ENCODE measurements at regions of chr16 and their contacts with region 1.

Region 1: GRCh38 chr16:67521095-67521804 is 7.4 kb upstream of the RIPOR1 start:
- DNase-seq: peak; percentile 59
- H3K4me3 ChIP-seq: peak overlapping the region; percentile 45
- H3K27me3 ChIP-seq: no peaks in the 10 kb centered on the region
- CTCF ChIP-seq: peak; percentile 98

Region 2: DNA sequence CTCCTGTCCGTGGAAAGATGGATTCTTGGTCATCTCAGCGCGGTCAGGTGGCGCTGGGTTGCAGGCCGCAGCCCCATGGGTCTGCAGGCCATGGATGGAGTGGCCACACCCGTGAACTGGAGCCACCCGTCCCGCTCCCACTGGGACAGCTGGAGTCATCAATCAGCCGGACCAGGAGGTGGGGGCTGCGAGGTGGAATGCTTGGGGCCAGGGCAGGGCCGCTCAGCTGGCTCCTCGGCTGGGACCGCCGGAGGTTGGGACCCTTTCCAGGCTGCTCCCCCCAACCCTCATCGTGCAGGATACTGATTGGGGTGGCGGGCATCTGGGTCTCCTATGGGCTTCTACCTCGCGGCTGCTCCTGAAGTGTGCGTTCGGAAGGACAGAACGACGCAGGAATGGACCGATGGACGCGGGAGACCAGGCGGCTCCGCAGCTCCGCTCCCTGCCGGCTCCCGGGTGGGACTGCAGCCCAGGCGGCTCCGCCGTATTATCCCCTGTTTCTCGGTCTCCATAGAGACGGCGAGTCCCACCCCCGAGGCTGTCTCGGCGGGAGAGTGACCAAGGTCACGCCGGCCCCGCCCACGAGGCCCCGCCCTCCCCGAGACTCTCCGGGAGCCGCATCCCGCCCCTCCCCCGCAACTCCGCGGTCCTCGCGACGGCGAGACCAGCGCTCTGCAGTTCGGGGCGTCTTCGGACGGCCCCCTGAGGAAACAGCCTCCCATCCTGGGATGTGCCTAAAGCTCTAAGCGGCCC is 128.0 kb before region 1 on chr16 and contains the start of gene TPPP3:
- CTCF ChIA-PET with region 1: no interaction called
- POLR2A ChIA-PET with region 1: no interaction called
- DNase-seq: peak; percentile 24
- H3K4me3 ChIP-seq: peak within 1 kb of the TSS; percentile 31
- H3K27me3 ChIP-seq: peaks cover 6% of the 10 kb centered on the region
- CTCF ChIP-seq: peak; percentile 72
- polyA plus RNA-seq, gene TPPP3: 0.26 and 0.64 TPM in 2 replicates

Region 3: GRCh38 chr16:67421035-67421434 is 100.2 kb before region 1 on chr16:
- CTCF ChIA-PET with region 1: no interaction called
- POLR2A ChIA-PET with region 1: no interaction called
- DNase-seq: no peak
- H3K4me3 ChIP-seq: no peak overlapping the region
- H3K27me3 ChIP-seq: peaks cover 12% of the 10 kb centered on the region
- CTCF ChIP-seq: no peak

Region 4: GRCh38 chr16:67480833-67481560 is 40.3 kb before region 1 on chr16 and contains the start of gene ATP6V0D1:
- CTCF ChIA-PET with region 1: interaction called, 63 read pairs
- POLR2A ChIA-PET with region 1: no interaction called
- DNase-seq: peak; percentile 89
- H3K4me3 ChIP-seq: peak within 1 kb of the TSS; percentile 86
- H3K27me3 ChIP-seq: no peaks in the 10 kb centered on the region
- CTCF ChIP-seq: peak; percentile 87
- polyA plus RNA-seq, gene ATP6V0D1: 111 and 155 TPM in 2 replicates

Region 5: GRCh38 chr16:67504041-67505021 is 16.9 kb before region 1 on chr16:
- CTCF ChIA-PET with region 1: interaction called, 34 read pairs
- POLR2A ChIA-PET with region 1: no interaction called
- DNase-seq: no peak
- H3K4me3 ChIP-seq: no peak overlapping the region
- H3K27me3 ChIP-seq: no peaks in the 10 kb centered on the region
- CTCF ChIP-seq: no peak

Region 6: GRCh38 chr16:67555795-67556212 is 34.6 kb after region 1 on chr16:
- CTCF ChIA-PET with region 1: interaction called, 35 read pairs
- POLR2A ChIA-PET with region 1: no interaction called
- DNase-seq: no peak
- H3K4me3 ChIP-seq: no peak overlapping the region
- H3K27me3 ChIP-seq: no peaks in the 10 kb centered on the region
- CTCF ChIP-seq: no peak

Region 7: GRCh38 chr16:67641779-67642708 is 120.8 kb after region 1 on chr16:
- CTCF ChIA-PET with region 1: interaction called, 181 read pairs
- POLR2A ChIA-PET with region 1: no interaction called
- DNase-seq: no peak
- H3K4me3 ChIP-seq: no peak overlapping the region
- H3K27me3 ChIP-seq: peaks cover 12% of the 10 kb centered on the region
- CTCF ChIP-seq: no peak

Region 8: GRCh38 chr16:67667817-67668494 is 146.7 kb after region 1 on chr16:
- CTCF ChIA-PET with region 1: interaction called, 208 read pairs
- POLR2A ChIA-PET with region 1: interaction called, 6 read pairs
- DNase-seq: peak; percentile 59
- H3K4me3 ChIP-seq: no peak overlapping the region
- H3K27me3 ChIP-seq: no peaks in the 10 kb centered on the region
- CTCF ChIP-seq: peak; percentile 96

Region 9: GRCh38 chr16:68040507-68041288 is 519.4 kb after region 1 on chr16:
- CTCF ChIA-PET with region 1: interaction called, 10 read pairs
- POLR2A ChIA-PET with region 1: no interaction called
- DNase-seq: no peak
- H3K4me3 ChIP-seq: no peak overlapping the region
- H3K27me3 ChIP-seq: no peaks in the 10 kb centered on the region
- CTCF ChIP-seq: peak; percentile 85

Region 10: DNA sequence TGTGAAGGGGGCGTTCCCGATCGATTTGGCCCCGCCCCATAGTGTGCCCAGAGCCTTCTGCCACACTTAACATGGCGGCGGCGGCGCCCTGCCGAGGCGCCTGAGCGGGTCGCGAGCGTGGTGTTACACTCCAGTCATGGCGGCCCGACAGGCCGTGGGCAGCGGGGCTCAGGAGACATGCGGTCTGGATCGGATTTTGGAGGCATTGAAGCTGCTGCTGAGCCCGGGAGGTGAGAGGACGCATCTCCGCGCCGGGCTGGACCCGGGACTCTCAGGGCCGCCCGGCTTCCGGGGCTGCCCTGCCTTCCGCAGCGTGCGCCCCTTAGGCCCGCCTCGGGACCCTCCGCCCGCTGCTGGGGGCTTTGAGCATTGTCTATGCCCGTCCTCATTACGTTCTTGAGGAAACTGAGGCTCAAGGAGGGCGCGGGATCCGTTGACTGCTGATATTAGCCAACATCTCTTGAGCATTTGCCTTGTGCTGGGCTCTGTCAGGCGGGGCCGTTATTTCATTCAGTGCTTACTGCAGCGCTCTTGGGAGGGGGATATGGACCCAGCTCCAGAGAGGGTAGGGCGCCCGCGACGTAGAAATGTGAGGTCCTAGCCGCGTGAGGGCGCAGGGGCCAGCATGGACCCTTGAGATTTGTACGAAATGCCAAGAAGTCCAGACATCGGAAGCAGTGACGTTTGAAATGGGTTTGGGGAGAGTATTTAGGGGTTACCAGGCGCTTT is 1322.4 kb after region 1 on chr16 and contains the start of gene TANGO6:
- CTCF ChIA-PET with region 1: no interaction called
- POLR2A ChIA-PET with region 1: no interaction called
- DNase-seq: peak; percentile 11
- H3K4me3 ChIP-seq: peak within 1 kb of the TSS; percentile 65
- H3K27me3 ChIP-seq: no peaks in the 10 kb centered on the region
- CTCF ChIP-seq: peak; percentile 47
- polyA plus RNA-seq, gene TANGO6: 13.0 and 14.6 TPM in 2 replicates

Measured in BJ (cell line).